AG04450 (cell line): ENCODE measurements at regions of chr18 and their contacts with region 1.

Region 1: GRCh38 chr18:55234366-55235093 is 275.3 kb upstream of the CCDC68 start:
- DNase-seq: peak; percentile 56
- H3K4me3 ChIP-seq: no peak overlapping the region
- H3K27ac ChIP-seq: no peak overlapping the region
- H3K27me3 ChIP-seq: no peaks in the 10 kb centered on the region
- CTCF ChIP-seq: peak; percentile 90

Region 2: DNA sequence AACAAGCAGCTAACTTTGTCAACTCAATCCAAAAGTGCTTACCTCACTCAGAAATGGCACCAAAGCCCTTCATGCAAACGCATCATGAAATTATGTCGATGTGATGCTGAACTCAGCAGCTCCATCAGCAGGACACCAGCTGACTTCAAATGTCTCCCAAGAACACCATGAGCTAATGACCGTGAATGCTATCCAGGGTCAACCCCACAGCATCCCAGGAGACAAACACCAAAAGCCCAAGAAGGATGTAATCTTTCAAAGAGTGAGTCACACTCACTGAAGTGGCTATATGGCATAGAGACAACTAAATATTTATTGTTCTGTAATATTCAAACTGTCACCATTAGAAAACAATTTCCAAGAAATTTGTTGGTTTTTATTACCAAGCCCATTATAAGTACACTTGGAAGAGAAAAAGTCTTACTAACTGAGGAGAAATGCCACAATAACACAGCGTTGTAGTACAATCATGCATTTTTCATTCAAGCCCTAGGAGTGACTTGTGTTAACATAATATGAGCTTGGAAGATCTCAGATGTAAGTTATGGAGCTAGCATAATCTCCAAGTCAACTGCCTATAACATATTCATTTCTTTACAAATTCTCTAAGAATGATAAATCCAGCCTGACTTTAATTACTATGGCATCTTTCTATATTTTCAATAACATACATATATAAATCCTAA is 110.3 kb before region 1 on chr18:
- CTCF ChIA-PET with region 1: no interaction called
- POLR2A ChIA-PET with region 1: no interaction called
- DNase-seq: no peak
- H3K4me3 ChIP-seq: no peak overlapping the region
- H3K27ac ChIP-seq: no peak overlapping the region
- H3K27me3 ChIP-seq: no peaks in the 10 kb centered on the region
- CTCF ChIP-seq: no peak

Region 3: GRCh38 chr18:55173291-55173690 is 61.2 kb before region 1 on chr18:
- CTCF ChIA-PET with region 1: no interaction called
- POLR2A ChIA-PET with region 1: no interaction called
- DNase-seq: no peak
- H3K4me3 ChIP-seq: no peak overlapping the region
- H3K27ac ChIP-seq: no peak overlapping the region
- H3K27me3 ChIP-seq: no peaks in the 10 kb centered on the region
- CTCF ChIP-seq: no peak

Region 4: DNA sequence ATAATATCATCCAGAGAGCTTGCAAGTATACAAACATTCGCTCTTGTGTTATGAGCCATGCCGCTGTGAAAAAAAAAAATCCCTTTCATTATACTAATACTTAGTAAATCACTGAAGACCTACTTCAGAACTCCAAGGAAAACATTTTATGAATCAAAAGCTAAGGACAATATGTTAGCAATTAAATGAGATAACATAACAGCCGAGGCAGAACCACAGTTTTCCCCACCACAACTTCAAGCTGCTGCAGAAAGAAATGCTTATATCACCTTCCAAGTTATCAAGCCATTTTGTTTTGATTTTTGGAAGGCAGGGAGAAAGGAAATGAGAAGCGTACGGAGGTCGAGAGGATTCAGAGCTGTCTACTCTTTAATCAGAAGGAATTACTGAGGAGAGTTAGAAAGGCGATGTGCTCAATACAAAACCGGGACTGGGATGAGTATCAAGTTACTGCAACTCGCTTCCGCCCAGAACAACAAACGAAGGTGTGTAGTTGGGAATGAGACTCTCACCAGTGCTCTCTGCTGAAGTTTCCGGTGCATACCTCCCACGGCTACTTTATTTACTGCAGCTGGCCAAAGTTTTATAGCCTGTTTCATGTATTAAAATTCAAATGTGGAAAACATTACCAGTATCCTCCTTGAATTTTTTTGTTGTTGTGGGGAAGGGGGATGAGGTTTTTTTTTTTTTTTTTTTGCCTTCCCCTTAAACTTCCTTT is 16.9 kb after region 1 on chr18:
- CTCF ChIA-PET with region 1: interaction called, 14 read pairs
- POLR2A ChIA-PET with region 1: no interaction called
- DNase-seq: no peak
- H3K4me3 ChIP-seq: no peak overlapping the region
- H3K27ac ChIP-seq: no peak overlapping the region
- H3K27me3 ChIP-seq: no peaks in the 10 kb centered on the region
- CTCF ChIP-seq: no peak

Region 5: DNA sequence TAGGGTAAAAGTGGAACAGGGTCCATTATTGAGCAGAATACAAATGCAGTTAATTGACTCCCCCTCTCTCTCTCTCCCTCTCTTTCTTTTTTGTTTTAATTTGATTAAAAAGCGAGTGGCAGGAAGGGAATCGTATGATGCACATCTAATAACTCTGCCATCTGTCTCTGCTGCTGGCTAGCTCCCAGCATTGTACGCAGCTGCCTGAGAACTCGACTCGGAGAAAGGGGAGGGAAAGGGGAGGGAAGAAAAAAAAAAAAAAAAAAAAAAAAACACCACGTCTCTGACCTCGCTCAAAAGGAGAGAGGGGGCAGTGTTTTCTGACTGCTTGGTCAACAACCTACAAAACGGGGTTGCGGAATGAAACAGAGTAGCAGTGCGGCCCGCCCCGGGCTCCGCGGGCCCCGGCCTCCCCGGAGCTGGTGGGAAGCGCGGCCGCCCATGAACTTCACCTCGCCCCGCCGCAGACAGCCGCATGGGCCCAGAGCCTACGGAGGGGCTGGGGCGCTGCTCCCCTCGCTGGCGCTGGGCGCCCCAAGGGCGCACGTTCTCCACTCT is 87.7 kb after region 1 on chr18:
- CTCF ChIA-PET with region 1: interaction called, 19 read pairs
- POLR2A ChIA-PET with region 1: interaction called, 4 read pairs
- DNase-seq: peak; percentile 88
- H3K4me3 ChIP-seq: peak overlapping the region; percentile 68
- H3K27ac ChIP-seq: peak overlapping the region; percentile 88
- H3K27me3 ChIP-seq: no peaks in the 10 kb centered on the region
- CTCF ChIP-seq: 0 out of 2 replicates have a peak, but pooled peaks have one; percentile 9

Region 6: DNA sequence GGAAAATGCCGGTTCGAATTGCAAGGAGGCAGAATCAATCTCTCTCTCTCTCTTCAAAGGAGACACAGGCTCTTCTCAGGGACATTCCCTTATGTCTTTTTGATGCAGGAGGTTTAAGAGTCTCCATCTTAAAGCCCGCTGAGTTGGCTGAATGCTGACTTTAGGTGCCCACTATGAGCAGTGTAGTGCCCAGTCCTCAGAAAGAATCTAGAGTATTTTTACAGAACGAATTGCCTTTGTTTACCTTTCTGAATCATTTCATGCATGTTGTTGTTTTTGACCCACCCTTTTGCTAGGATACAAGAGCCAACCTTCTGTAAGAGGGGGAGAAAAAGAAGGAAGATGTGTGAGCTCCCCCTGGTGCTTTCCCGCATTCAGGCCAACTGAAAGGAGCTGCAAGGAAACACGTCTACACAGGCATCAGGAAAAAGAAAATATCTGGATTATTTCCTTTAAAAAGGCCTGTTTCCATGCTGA is 547.0 kb after region 1 on chr18:
- CTCF ChIA-PET with region 1: interaction called, 23 read pairs
- POLR2A ChIA-PET with region 1: no interaction called
- DNase-seq: no peak
- H3K4me3 ChIP-seq: no peak overlapping the region
- H3K27ac ChIP-seq: no peak overlapping the region
- H3K27me3 ChIP-seq: no peaks in the 10 kb centered on the region
- CTCF ChIP-seq: peak; percentile 82

Region 7: GRCh38 chr18:56575819-56576663 is 1341.5 kb after region 1 on chr18:
- CTCF ChIA-PET with region 1: interaction called, 36 read pairs
- POLR2A ChIA-PET with region 1: no interaction called
- DNase-seq: peak; percentile 34
- H3K4me3 ChIP-seq: no peak overlapping the region
- H3K27ac ChIP-seq: no peak overlapping the region
- H3K27me3 ChIP-seq: no peaks in the 10 kb centered on the region
- CTCF ChIP-seq: peak; percentile 70